ENCODE measurements at regions of chr18 and their contacts with region 1.

Region 1: GRCh38 chr18:9614401-9615279 is at the start of gene PPP4R1:
- DNase-seq: peak; percentile 75 to 83
- ATAC-seq: peak; percentile 62 to 88 (median 77)
- H3K4me3 ChIP-seq: peak within 1 kb of the TSS; percentile 64 to 91 (median 86)
- H3K27ac ChIP-seq: peak within 1 kb of the TSS; percentile 93 to 99 (median 97)
- H3K4me1 ChIP-seq: peaks cover 3 to 52% (median 31%) of the 10 kb centered on the region in 9 donors
- H3K27me3 ChIP-seq: no peaks in the 10 kb centered on the region
- CTCF ChIP-seq: no peak
- total RNA-seq, gene PPP4R1: 56.8 to 87.4 (median 62.6) TPM

Region 2: GRCh38 chr18:9575558-9575957 is 39.1 kb before region 1 on chr18:
- intact Hi-C with region 1: loop called in 2 of 10 experiments (anchors 2 kb)
- DNase-seq: peak; percentile 42 to 92
- ATAC-seq: peak; percentile 95 to 99 (median 98)
- H3K4me3 ChIP-seq: no peak overlapping the region
- H3K27ac ChIP-seq: peak overlapping the region in 6 of 10 donors; percentile 6 to 60 (median 38)
- H3K4me1 ChIP-seq: peaks cover 0 to 13% (median 7%) of the 10 kb centered on the region in 9 donors
- H3K27me3 ChIP-seq: no peaks in the 10 kb centered on the region
- CTCF ChIP-seq: peak; percentile 81 to 94 (median 87)

Region 3: DNA sequence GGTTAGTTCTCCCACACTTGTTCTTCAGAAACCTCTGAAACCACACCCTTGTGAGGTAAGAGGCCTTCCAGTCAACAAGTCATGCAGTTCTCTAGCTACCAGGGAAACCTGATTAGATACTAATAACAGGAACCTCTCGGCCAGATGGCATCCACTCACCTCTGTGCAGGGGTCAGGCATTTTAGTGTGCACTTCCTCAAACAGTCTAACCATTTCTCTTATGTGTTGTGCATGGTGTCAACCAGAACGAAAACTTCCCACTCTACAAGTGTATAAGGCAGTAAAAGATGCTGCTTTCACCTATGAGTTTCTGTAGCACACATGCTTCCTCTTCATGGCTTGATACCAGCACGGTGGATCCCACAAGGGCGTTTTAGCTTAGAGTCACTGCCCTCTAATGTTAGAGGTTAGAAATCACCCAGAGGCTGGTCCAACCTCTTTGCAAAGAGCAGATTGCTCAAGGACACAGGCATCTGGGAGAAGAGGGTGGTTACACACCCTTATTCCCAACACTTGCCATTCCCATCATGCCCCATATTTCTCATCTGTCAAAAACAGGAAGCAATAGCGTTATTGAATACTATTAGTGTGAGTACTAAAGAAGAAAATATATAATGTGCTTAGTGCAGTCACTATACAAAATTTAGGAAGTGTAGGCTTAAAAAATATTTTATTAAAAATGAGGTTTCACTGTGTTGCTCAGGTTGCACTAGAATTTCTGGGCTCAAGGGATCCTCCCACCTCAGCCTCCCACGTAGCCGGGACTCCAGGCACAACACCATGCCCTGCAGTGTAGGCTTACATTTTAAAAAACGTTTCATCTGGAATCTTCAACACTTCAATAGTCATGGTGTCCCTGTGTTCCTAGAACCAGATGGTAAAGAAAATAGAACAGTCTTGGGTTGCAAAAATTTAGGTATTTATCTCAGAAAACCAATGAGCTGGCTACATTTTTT is 58.9 kb after region 1 on chr18:
- intact Hi-C with region 1: loop called in 4 of 10 experiments (anchors 2 to 10 kb)
- DNase-seq: peak in 1 of 2 donors; percentile 36
- ATAC-seq: peak; percentile 87 to 95 (median 91)
- H3K4me3 ChIP-seq: no peak overlapping the region
- H3K27ac ChIP-seq: peak overlapping the region in 3 of 10 donors; percentile 6 to 49 (median 31)
- H3K4me1 ChIP-seq: peaks cover 0 to 17% (median 0%) of the 10 kb centered on the region in 9 donors
- H3K27me3 ChIP-seq: no peaks in the 10 kb centered on the region
- CTCF ChIP-seq: peak in 6 of 9 donors; percentile 19 to 55 (median 48)

Region 4: GRCh38 chr18:9771261-9771976 is 156.8 kb after region 1 on chr18:
- intact Hi-C with region 1: loop called in 1 of 10 experiments (anchors 5 kb)
- DNase-seq: peak; percentile 88 to 89
- ATAC-seq: peak; percentile 90 to 98 (median 95)
- H3K4me3 ChIP-seq: peak overlapping the region in 1 of 10 donors; percentile 27
- H3K27ac ChIP-seq: peak overlapping the region in 4 of 10 donors; percentile 18 to 86 (median 28)
- H3K4me1 ChIP-seq: peaks cover 0 to 86% (median 8%) of the 10 kb centered on the region in 9 donors
- H3K27me3 ChIP-seq: no peaks in the 10 kb centered on the region
- CTCF ChIP-seq: peak; percentile 92 to 99 (median 99)

Region 5: GRCh38 chr18:10525371-10526210 is 911.0 kb after region 1 on chr18 and contains the start of gene NAPG:
- intact Hi-C with region 1: loop called in 1 of 10 experiments (anchors 10 kb)
- DNase-seq: peak; percentile 93 to 94
- ATAC-seq: peak; percentile 93 to 97 (median 96)
- H3K4me3 ChIP-seq: peak within 1 kb of the TSS; percentile 81 to 96 (median 90)
- H3K27ac ChIP-seq: peak within 1 kb of the TSS; percentile 96 to 99 (median 98)
- H3K4me1 ChIP-seq: peaks cover 3 to 51% (median 40%) of the 10 kb centered on the region in 9 donors
- H3K27me3 ChIP-seq: no peaks in the 10 kb centered on the region
- CTCF ChIP-seq: no peak
- total RNA-seq, gene NAPG: 30.5 to 49.9 (median 37.6) TPM

Measured in heart right ventricle (tissue), 16 donors.